Activated B cell treated with CpG ODN at 0.5 μM for 24 hours (primary cell): ENCODE measurements at regions of chr1 and their contacts with region 1.

Region 1: DNA sequence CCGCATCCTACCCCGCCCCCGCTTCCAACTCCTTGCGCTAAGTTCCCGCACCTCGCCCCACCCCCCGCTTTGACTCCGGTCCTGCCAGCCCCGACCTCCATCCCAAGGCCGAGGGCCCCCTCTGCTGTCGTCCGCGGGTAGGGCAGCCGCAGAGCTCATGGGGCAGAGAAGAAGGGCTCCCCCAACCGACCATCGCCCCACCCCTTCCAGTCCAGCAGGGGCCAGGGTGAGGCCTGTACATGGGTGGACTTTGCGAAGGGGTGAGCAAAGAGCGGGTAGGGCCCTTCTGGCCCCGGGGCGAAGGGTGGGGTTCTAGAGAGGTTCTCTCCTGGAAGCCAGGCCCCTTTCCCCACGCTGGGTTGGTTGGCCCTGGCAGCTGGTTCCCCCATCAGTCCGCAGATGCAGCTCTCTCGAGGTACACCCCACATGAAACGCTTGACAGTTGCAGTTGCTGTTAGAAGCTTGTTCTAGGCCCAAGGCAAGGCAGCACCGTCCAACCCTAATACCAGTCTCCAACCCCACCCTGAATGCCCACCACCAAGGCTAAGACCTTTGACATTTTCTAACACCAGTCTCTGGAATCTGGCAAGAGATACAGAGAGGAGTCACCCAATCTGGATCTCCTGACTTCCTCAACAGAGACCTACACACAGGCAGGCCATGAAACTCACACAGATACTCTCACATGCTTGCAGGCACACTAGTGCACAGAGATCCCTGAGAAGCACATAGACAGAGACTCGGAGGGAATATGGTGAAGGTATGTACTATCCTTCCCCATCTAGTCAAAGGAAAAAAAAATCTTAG is 25.3 kb upstream of the ADGRB2 start:
- DNase-seq: peak; percentile 99
- ATAC-seq: peak; percentile 74
- H3K4me3 Mint-ChIP-seq: peak overlapping the region; percentile 88
- H3K27ac Mint-ChIP-seq: peak overlapping the region; percentile 98
- H3K4me1 Mint-ChIP-seq: peaks cover 40% of the 10 kb centered on the region
- H3K27me3 Mint-ChIP-seq: peaks cover 4% of the 10 kb centered on the region
- CTCF ChIP-seq: no peak

Region 2: GRCh38 chr1:30627994-30628393 is 1161.5 kb before region 1 on chr1:
- CTCF ChIA-PET with region 1: no interaction called
- POLR2A ChIA-PET with region 1: no interaction called
- intact Hi-C with region 1: no loop called
- DNase-seq: no peak
- ATAC-seq: no peak
- H3K4me3 Mint-ChIP-seq: no peak overlapping the region
- H3K27ac Mint-ChIP-seq: no peak overlapping the region
- H3K4me1 Mint-ChIP-seq: no peaks in the 10 kb centered on the region
- H3K27me3 Mint-ChIP-seq: peaks cover 16% of the 10 kb centered on the region
- CTCF ChIP-seq: no peak

Region 3: DNA sequence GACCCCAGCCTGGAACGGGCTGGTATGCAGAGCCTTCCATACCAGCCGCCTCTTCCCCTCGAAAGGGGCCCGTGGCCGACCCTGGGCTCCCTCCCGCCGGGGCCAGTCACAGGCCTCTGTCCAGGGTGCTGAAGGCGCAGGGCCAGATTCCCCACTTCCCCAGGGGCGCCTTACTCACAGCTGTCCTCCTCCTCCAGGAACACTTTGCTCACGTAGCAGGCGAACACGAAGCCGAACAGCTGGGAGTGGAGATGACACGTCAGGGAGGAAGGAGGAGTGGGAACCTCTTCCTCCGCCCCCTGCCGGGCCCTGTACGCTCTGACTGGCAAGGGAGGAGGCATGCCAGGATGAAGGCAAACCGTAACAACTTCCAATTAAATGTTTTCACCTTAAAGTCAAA is 607.1 kb before region 1 on chr1:
- CTCF ChIA-PET with region 1: interaction called, 4 read pairs
- POLR2A ChIA-PET with region 1: no interaction called
- intact Hi-C with region 1: loop called (anchors 1 kb)
- DNase-seq: peak; percentile 55
- ATAC-seq: peak; percentile 68
- H3K4me3 Mint-ChIP-seq: no peak overlapping the region
- H3K27ac Mint-ChIP-seq: no peak overlapping the region
- H3K4me1 Mint-ChIP-seq: peaks cover 5% of the 10 kb centered on the region
- H3K27me3 Mint-ChIP-seq: peaks cover 45% of the 10 kb centered on the region
- CTCF ChIP-seq: no peak

Region 4: DNA sequence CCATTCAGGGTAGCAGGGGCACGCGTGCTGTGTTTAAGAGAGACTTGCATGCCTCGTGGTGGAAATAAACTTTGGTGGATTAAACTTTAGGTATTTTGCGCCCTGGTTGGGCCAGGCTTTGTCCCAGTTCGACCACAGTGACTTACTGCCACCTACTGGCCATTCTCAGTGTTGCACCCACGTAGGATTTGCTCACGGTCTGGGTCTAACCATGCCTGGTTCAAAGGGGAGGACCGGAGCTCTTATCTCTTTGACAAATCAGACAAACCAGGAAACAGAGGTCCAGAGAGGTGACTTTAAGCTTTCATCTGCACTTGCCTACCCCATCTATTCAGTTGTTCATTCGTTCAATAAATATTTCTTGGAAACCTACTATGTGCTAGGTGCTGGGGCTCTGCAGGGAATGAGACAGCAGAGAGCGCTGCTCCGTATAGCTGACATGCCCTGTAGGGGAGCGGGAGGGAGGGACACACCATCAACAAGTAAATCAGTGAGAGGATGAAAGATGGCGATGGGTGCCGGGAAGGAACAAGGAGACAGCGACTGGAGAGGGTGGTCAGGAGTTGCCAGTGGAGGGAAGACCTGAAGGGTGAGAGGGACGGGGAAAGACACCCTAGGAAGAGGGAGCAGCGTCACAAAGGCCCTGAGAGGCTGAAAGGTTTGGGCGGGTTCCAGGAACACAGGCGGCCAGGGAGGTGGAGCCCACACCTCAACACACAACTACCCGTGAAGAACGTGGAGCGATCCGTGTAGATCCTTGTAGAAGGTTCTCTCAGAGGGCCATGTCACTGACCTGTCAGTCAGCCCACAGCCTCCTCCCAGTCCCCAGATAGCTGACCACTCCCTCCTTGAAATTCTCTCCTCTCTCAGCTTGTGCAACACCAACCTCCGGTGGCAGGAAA is 240.3 kb before region 1 on chr1:
- CTCF ChIA-PET with region 1: interaction called, 15 read pairs
- POLR2A ChIA-PET with region 1: interaction called, 4 read pairs
- intact Hi-C with region 1: loop called (anchors 1 kb)
- DNase-seq: peak; percentile 79
- ATAC-seq: peak; percentile 98
- H3K4me3 Mint-ChIP-seq: peak overlapping the region; percentile 17
- H3K27ac Mint-ChIP-seq: no peak overlapping the region
- H3K4me1 Mint-ChIP-seq: peaks cover 11% of the 10 kb centered on the region
- H3K27me3 Mint-ChIP-seq: peaks cover 6% of the 10 kb centered on the region
- CTCF ChIP-seq: peak; percentile 53

Region 5: GRCh38 chr1:31644560-31645273 is 144.7 kb before region 1 on chr1 and contains the start of gene PEF1:
- CTCF ChIA-PET with region 1: interaction called, 9 read pairs
- POLR2A ChIA-PET with region 1: interaction called, 23 read pairs
- intact Hi-C with region 1: loop called (anchors 1 kb)
- DNase-seq: peak; percentile 98
- ATAC-seq: peak; percentile 90
- H3K4me3 Mint-ChIP-seq: peak within 1 kb of the TSS; percentile 100
- H3K27ac Mint-ChIP-seq: peak within 1 kb of the TSS; percentile 100
- H3K4me1 Mint-ChIP-seq: peaks cover 32% of the 10 kb centered on the region
- H3K27me3 Mint-ChIP-seq: no peaks in the 10 kb centered on the region
- CTCF ChIP-seq: no peak
- total RNA-seq, gene PEF1: 58.0 and 61.1 TPM in 2 replicates

Region 6: GRCh38 chr1:31762726-31763670 is 26.5 kb before region 1 on chr1:
- CTCF ChIA-PET with region 1: interaction called, 68 read pairs
- POLR2A ChIA-PET with region 1: interaction called, 41 read pairs
- intact Hi-C with region 1: loop called (anchors 1 kb)
- DNase-seq: peak; percentile 79
- ATAC-seq: peak; percentile 51
- H3K4me3 Mint-ChIP-seq: peak overlapping the region; percentile 78
- H3K27ac Mint-ChIP-seq: no peak overlapping the region
- H3K4me1 Mint-ChIP-seq: peaks cover 32% of the 10 kb centered on the region
- H3K27me3 Mint-ChIP-seq: peaks cover 3% of the 10 kb centered on the region
- CTCF ChIP-seq: no peak

Region 7: GRCh38 chr1:31867546-31867945 is 78.1 kb after region 1 on chr1:
- CTCF ChIA-PET with region 1: no interaction called
- POLR2A ChIA-PET with region 1: no interaction called
- intact Hi-C with region 1: no loop called
- DNase-seq: no peak
- ATAC-seq: no peak
- H3K4me3 Mint-ChIP-seq: no peak overlapping the region
- H3K27ac Mint-ChIP-seq: no peak overlapping the region
- H3K4me1 Mint-ChIP-seq: peaks cover 8% of the 10 kb centered on the region
- H3K27me3 Mint-ChIP-seq: no peaks in the 10 kb centered on the region
- CTCF ChIP-seq: no peak

Region 8: GRCh38 chr1:31955917-31956736 is 166.7 kb after region 1 on chr1:
- CTCF ChIA-PET with region 1: interaction called, 56 read pairs
- POLR2A ChIA-PET with region 1: interaction called, 15 read pairs
- intact Hi-C with region 1: loop called (anchors 2 kb)
- DNase-seq: peak; percentile 56
- ATAC-seq: peak; percentile 97
- H3K4me3 Mint-ChIP-seq: peak overlapping the region; percentile 72
- H3K27ac Mint-ChIP-seq: peak overlapping the region; percentile 93
- H3K4me1 Mint-ChIP-seq: peaks cover 41% of the 10 kb centered on the region
- H3K27me3 Mint-ChIP-seq: no peaks in the 10 kb centered on the region
- CTCF ChIP-seq: no peak

Region 9: GRCh38 chr1:31991182-31991581 is 201.7 kb after region 1 on chr1:
- CTCF ChIA-PET with region 1: no interaction called
- POLR2A ChIA-PET with region 1: no interaction called
- intact Hi-C with region 1: no loop called
- DNase-seq: no peak
- ATAC-seq: no peak
- H3K4me3 Mint-ChIP-seq: no peak overlapping the region
- H3K27ac Mint-ChIP-seq: no peak overlapping the region
- H3K4me1 Mint-ChIP-seq: peaks cover 8% of the 10 kb centered on the region
- H3K27me3 Mint-ChIP-seq: no peaks in the 10 kb centered on the region
- CTCF ChIP-seq: no peak

Region 10: DNA sequence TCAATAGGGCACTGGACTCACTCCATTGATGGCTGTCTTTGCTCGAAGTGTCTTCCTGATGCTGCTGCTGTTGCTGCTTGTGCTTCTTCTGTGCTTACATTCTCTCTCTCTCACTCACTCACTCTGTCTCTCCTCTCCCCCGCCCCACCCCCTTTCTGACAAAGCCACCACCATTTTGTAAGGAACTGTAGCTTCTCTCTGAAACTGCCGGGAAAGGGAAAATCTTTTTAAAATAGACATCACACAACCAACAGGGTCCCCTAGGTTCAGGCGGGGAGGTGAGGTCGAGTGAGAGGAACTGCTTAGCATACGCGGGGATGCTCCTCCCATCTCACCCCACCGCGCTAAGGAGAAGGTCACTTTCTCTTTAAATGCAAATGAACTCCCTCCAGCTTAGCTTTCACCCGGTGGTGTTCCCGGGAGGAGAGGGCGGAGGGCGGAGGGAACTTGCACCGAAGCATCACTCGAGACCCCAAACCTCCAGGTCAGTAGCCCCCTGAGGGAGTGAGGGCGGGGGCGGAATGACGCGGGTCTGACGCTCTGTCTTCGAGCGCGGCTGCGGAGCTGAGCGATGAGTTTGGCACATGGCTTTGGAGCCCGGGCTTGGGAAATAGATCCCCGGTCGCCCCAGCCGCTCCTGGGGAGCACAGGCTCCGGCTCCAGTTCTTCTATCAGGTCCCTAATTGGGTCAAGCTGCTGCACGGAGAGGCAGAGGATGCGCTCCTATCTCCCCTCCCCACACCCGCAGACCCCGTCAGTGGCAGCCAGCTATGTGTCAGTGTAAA is 411.0 kb after region 1 on chr1 and contains the start of gene CCDC28B:
- CTCF ChIA-PET with region 1: no interaction called
- POLR2A ChIA-PET with region 1: no interaction called
- intact Hi-C with region 1: loop called (anchors 2 kb)
- DNase-seq: peak; percentile 62
- ATAC-seq: peak; percentile 51
- H3K4me3 Mint-ChIP-seq: peak within 1 kb of the TSS; percentile 87
- H3K27ac Mint-ChIP-seq: peak within 1 kb of the TSS; percentile 87
- H3K4me1 Mint-ChIP-seq: peaks cover 49% of the 10 kb centered on the region
- H3K27me3 Mint-ChIP-seq: no peaks in the 10 kb centered on the region
- CTCF ChIP-seq: no peak
- total RNA-seq, gene CCDC28B: 50.4 and 56.9 TPM in 2 replicates

Region 11: GRCh38 chr1:32521165-32521564 is 731.7 kb after region 1 on chr1:
- CTCF ChIA-PET with region 1: no interaction called
- POLR2A ChIA-PET with region 1: no interaction called
- intact Hi-C with region 1: no loop called
- DNase-seq: no peak
- ATAC-seq: no peak
- H3K4me3 Mint-ChIP-seq: peak overlapping the region; percentile 82
- H3K27ac Mint-ChIP-seq: no peak overlapping the region
- H3K4me1 Mint-ChIP-seq: peaks cover 5% of the 10 kb centered on the region
- H3K27me3 Mint-ChIP-seq: no peaks in the 10 kb centered on the region
- CTCF ChIP-seq: no peak